T-cell (primary cell): ENCODE measurements at regions of chr16 and their contacts with region 1.

Region 1: GRCh38 chr16:10599626-10600025 is 19.2 kb upstream of the EMP2 start:
- DNase-seq: no peak
- ATAC-seq: no peak
- H3K4me3 ChIP-seq: no peak overlapping the region
- H3K4me3 Mint-ChIP-seq: no peak overlapping the region
- H3K27ac ChIP-seq: no peak overlapping the region
- H3K27ac Mint-ChIP-seq: no peak overlapping the region
- H3K4me1 ChIP-seq: no peaks in the 10 kb centered on the region
- H3K4me1 Mint-ChIP-seq: no peaks in the 10 kb centered on the region
- H3K27me3 ChIP-seq: peaks cover 0 to 44% of the 10 kb centered on the region in 2 experiments
- H3K27me3 Mint-ChIP-seq: peaks cover 7 to 17% of the 10 kb centered on the region in 2 donors

Region 2: GRCh38 chr16:10509534-10510025 is 90.0 kb before region 1 on chr16:
- CTCF ChIA-PET with region 1: no interaction called
- POLR2A ChIA-PET with region 1: no interaction called
- DNase-seq: peak; percentile 15 to 86 (median 46)
- ATAC-seq: peak; percentile 87 to 92 (median 90)
- H3K4me3 ChIP-seq: no peak overlapping the region
- H3K4me3 Mint-ChIP-seq: no peak overlapping the region
- H3K27ac ChIP-seq: no peak overlapping the region
- H3K27ac Mint-ChIP-seq: no peak overlapping the region
- H3K4me1 ChIP-seq: no peaks in the 10 kb centered on the region
- H3K4me1 Mint-ChIP-seq: peaks cover 3 to 7% (median 4%) of the 10 kb centered on the region in 3 donors
- H3K27me3 ChIP-seq: no peaks in the 10 kb centered on the region
- H3K27me3 Mint-ChIP-seq: peaks cover 0 to 4% of the 10 kb centered on the region in 2 donors

Region 3: DNA sequence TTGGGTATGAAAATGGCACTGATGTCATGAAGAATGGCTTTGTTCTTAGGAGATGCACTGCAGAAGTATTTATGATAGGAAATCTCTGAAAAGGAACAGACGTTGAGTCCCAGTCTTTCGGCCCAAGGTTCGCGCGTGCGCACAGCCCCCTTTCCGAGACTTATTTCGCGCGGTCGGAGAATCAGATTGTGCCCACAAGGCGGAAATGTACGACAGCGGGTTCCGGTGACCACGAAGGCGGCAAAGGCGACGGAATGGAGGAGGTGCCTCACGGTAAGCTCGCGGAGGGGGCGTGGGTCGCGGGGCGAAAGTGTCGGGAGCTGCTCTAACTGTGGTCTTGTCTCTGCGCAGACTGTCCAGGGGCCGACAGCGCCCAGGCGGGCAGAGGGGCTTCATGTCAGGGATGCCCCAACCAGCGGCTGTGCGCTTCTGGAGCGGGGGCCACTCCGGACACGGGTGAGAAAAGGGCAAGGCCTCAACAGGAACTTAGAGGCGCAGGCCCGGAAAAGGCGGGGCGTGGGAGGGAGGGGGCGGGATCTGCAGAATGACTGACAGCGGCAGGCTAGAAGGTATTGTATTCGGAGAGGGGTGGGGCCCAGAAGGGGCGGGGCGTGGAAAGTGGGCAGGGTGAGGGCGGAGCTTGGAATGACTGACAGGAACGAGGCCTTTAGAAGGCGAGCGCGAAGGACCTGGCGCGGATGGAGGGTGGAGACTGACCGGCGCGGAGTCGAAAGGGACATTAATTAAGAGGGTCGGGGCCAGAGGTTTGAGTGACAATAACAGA is 144.2 kb after region 1 on chr16 and contains the start of gene NUBP1:
- CTCF ChIA-PET with region 1: no interaction called
- POLR2A ChIA-PET with region 1: no interaction called
- DNase-seq: peak; percentile 96 to 100 (median 98)
- ATAC-seq: peak; percentile 93 to 96 (median 96)
- H3K4me3 ChIP-seq: peak within 1 kb of the TSS; percentile 63 to 83
- H3K4me3 Mint-ChIP-seq: peak within 1 kb of the TSS; percentile 85 to 96 (median 87)
- H3K27ac ChIP-seq: peak within 1 kb of the TSS; percentile 81
- H3K27ac Mint-ChIP-seq: peak within 1 kb of the TSS; percentile 93 to 100
- H3K4me1 ChIP-seq: peaks cover 6 to 25% of the 10 kb centered on the region in 2 experiments
- H3K4me1 Mint-ChIP-seq: peaks cover 34 to 40% (median 39%) of the 10 kb centered on the region in 3 donors
- H3K27me3 ChIP-seq: no peaks in the 10 kb centered on the region
- H3K27me3 Mint-ChIP-seq: no peaks in the 10 kb centered on the region
- total RNA-seq, gene NUBP1: 17.5 to 29.4 (median 25.9) TPM

Region 4: DNA sequence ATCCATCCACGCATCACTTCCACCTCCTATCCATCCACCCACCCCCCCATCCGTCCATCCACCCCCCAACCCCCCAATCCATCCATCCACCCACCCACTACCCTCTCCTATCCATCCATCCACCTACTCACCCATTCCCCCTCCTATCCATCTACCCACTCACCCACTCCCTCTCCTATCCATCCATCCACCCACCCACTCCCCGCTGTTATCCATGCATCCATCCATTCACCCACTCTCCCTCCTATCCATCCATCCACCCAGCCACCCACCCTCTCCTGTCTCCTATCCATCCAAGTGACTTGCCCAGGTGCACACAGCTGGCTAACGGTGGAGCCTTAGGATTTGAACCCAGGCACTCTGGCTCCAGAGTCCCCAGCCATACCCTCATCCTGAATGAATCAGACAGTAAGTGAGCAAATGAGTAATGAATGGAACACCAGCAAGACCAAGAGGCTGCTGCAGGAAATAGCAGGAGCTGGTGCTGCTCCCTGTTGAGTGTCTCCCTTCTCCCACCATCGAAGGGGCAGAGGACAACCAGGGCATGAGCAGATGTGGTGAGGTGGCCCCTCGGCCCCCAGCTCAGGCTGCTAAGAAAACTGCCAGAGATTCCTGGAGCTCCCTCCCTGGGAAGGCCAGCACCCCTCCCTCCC is 924.6 kb after region 1 on chr16:
- CTCF ChIA-PET with region 1: no interaction called
- POLR2A ChIA-PET with region 1: interaction called in 1 of 2 experiments, 10 read pairs
- DNase-seq: no peak
- ATAC-seq: no peak
- H3K4me3 ChIP-seq: no peak overlapping the region
- H3K4me3 Mint-ChIP-seq: no peak overlapping the region
- H3K27ac ChIP-seq: no peak overlapping the region
- H3K27ac Mint-ChIP-seq: no peak overlapping the region
- H3K4me1 ChIP-seq: no peaks in the 10 kb centered on the region
- H3K4me1 Mint-ChIP-seq: no peaks in the 10 kb centered on the region
- H3K27me3 ChIP-seq: peaks cover 0 to 4% of the 10 kb centered on the region in 2 experiments
- H3K27me3 Mint-ChIP-seq: peaks cover 0 to 7% of the 10 kb centered on the region in 2 donors